Mammary epithelial cell (primary cell): ENCODE measurements at regions of chr14 and their contacts with region 1.

Region 1: DNA sequence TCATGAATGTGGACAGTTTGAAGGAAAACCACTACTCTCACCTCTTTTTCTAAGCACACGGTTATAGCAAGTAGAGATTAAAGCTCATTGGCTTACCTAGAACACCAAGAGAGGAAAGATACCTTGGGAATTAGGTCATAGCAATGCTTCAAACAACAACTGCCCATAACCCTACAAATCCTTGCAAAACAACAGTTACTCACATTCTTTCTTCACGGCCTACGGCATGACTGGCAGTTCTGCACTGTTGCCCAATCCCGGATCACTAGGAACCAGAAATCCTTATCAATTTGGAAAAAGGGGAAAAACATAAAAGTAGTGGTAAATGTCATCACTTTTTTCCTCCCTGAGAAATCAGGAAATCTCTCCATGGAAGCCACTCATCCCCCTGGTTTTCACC is 9.6 kb upstream of the ISM2 start:
- DNase-seq: peak; percentile 39
- H3K4me3 ChIP-seq: no peak overlapping the region
- H3K27ac ChIP-seq: no peak overlapping the region
- H3K4me1 ChIP-seq: no peaks in the 10 kb centered on the region
- H3K27me3 ChIP-seq: no peaks in the 10 kb centered on the region
- CTCF ChIP-seq: no peak

Region 2: GRCh38 chr14:77260631-77261030 is 247.6 kb before region 1 on chr14:
- CTCF ChIA-PET with region 1: no interaction called
- dilution Hi-C with region 1: no loop called
- in situ Hi-C with region 1: no loop called
- intact Hi-C with region 1: no loop called
- DNase-seq: no peak
- H3K4me3 ChIP-seq: no peak overlapping the region
- H3K27ac ChIP-seq: no peak overlapping the region
- H3K4me1 ChIP-seq: no peaks in the 10 kb centered on the region
- H3K27me3 ChIP-seq: peaks cover 1% of the 10 kb centered on the region
- CTCF ChIP-seq: no peak

Region 3: DNA sequence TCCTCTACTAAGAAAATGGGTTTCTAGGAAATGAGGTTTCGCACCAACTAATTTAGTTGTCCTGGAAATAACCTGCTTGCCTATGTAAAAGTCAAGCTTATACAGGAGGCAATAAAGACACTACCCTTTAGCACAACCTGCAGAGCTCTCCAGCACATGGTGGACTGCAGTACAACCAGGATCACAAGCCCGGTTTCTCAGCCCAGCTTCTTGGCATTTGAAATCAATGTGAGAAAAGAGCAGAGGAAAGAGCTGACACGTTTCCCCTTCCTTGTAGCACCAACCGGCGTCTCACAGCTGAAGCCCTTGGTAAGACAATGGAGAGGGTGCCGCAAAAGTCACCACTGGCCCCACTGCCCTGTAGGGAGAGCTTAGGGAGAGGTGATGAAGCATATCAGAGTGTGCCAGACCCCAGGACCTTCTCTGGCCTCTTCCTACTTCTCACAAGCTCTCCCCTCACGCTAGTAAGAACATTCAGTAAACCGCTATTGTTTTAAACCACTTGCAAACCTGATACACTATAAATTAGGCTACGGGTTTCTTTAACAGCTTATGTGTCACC is 99.6 kb after region 1 on chr14:
- CTCF ChIA-PET with region 1: no interaction called
- dilution Hi-C with region 1: loop called (anchors 5 kb)
- in situ Hi-C with region 1: no loop called
- intact Hi-C with region 1: no loop called
- DNase-seq: no peak
- H3K4me3 ChIP-seq: no peak overlapping the region
- H3K27ac ChIP-seq: no peak overlapping the region
- H3K4me1 ChIP-seq: peaks cover 13% of the 10 kb centered on the region
- H3K27me3 ChIP-seq: no peaks in the 10 kb centered on the region
- CTCF ChIP-seq: no peak